HAP-1 (cell line): ENCODE measurements at regions of chr9 and their contacts with region 1.

Region 1: GRCh38 chr9:9912459-9912858 is 700.3 kb downstream of the PTPRD start:
- DNase-seq: peak in 1 of 2 experiments; percentile 36
- H3K4me3 ChIP-seq: no peak overlapping the region
- H3K4me1 ChIP-seq: no peaks in the 10 kb centered on the region
- H3K27me3 ChIP-seq: no peaks in the 10 kb centered on the region

Region 2: GRCh38 chr9:9612270-9612669 is 300.2 kb before region 1 on chr9:
- in situ Hi-C with region 1: loop called (anchors 25 kb)
- DNase-seq: no peak
- H3K4me3 ChIP-seq: no peak overlapping the region
- H3K4me1 ChIP-seq: no peaks in the 10 kb centered on the region; the same call in 1 of the 2 replicates
- H3K27me3 ChIP-seq: no peaks in the 10 kb centered on the region

Region 3: DNA sequence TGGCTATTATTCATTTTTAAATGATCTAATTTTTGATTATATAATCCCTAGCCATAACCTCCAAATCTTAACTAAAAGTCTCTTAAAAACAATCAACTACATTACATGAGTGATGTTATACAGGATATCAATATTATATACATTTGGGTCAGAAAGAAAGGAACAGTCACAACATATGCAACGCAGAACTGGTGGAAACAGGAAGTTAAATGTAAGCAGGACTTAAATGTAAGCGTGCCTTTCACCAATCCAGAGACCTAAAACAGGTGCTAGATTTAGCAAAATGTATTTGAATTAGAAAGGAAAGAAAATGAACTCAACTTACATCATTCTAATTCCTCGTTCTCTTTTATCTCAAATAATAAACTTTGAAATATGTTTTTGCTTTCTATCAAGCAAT is 38.2 kb before region 1 on chr9:
- in situ Hi-C with region 1: no loop called
- DNase-seq: no peak
- H3K4me3 ChIP-seq: no peak overlapping the region
- H3K4me1 ChIP-seq: no peaks in the 10 kb centered on the region
- H3K27me3 ChIP-seq: no peaks in the 10 kb centered on the region